Activated T-helper 2 cell treated with anti-CD3 and anti-CD28 coated beads, Interferon-gamma antibody, Interleukin-2, Interleukin-4, amounts not matched to agents 10 μg/mL and 5 μg/mL and 100 μg/mL, durations not matched to agents 14 hours and 24 hours and 36 hours (primary cell): ENCODE measurements at regions of chr6 and their contacts with region 1.

Region 1: GRCh38 chr6:87322304-87323212 is at the start of gene SMIM8:
- DNase-seq: peak; percentile 79
- H3K4me3 Mint-ChIP-seq: peak within 1 kb of the TSS; percentile 97
- H3K27ac Mint-ChIP-seq: peak within 1 kb of the TSS; percentile 83
- H3K4me1 Mint-ChIP-seq: peaks cover 6% of the 10 kb centered on the region
- H3K27me3 Mint-ChIP-seq: peaks cover 2% of the 10 kb centered on the region
- total RNA-seq, gene SMIM8: 6.3 and 10.3 TPM in 2 replicates

Region 2: DNA sequence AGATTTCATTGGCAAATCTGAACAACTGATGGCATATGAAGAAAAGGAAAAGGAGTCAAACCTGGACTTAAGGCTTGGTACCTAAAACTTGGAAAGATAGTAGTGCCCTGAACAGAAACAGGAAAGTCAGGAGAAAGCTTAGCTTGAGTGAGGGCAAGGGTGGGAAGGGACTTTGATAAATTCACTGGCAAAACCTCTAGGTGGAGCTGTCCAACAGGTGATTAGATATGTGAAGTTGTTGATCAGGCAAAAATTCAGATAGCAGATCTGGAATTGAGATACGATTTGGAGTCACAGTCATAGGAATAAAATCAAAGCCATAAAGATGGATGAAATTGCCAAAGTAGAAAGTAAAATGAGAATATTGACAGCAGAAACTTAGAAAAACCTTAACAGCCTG is 183.3 kb before region 1 on chr6:
- intact Hi-C with region 1: loop called (anchors 5 kb)
- DNase-seq: no peak
- H3K4me3 Mint-ChIP-seq: no peak overlapping the region
- H3K27ac Mint-ChIP-seq: no peak overlapping the region
- H3K4me1 Mint-ChIP-seq: peaks cover 1% of the 10 kb centered on the region
- H3K27me3 Mint-ChIP-seq: peaks cover 48% of the 10 kb centered on the region

Region 3: DNA sequence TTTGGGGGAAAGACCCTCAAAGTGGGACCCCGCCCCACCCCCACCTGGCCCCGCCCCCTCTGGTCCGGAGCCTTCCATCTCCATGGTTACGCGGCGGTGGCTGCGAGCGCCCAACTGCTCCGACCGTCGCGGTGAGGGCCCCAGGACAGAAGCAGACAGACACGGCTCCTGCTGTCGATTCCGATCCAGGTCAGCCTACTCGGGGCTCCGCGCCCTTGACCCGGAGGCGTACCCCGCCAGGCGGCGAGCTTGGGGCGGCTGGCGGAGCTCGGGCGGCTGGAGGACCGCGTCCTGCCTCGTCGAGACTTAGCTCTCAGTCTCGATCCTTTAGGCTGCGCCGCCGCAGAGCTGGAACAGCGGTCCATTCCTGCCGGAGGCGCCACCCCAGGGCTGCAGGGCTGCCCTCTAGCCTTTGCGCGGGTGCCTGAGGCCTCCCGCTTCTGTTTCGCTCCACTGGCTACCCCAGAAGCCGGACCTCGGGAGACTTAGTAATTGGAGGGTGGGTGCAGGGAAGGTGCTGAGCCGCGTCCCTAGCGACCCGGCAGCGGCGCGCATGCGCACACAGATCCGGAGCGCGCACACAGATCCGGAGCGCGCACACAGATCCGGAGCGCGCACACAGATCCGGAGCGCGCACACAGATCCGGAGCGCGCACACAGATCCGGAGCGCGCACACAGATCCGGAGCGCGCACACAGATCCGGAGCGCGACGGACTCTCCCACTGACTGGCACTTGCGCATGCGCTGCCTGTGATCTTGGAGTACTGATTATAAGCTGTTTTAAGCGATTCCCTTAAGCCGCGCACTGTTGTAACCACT is 85.6 kb after region 1 on chr6 and contains the start of gene CFAP206:
- intact Hi-C with region 1: loop called (anchors 1 kb)
- DNase-seq: peak; percentile 70
- H3K4me3 Mint-ChIP-seq: peak within 1 kb of the TSS; percentile 79
- H3K27ac Mint-ChIP-seq: no peak within 1 kb of the TSS
- H3K4me1 Mint-ChIP-seq: peaks cover 7% of the 10 kb centered on the region
- H3K27me3 Mint-ChIP-seq: peaks cover 29% of the 10 kb centered on the region
- total RNA-seq, gene CFAP206: not detected in 2 replicates

Region 4: DNA sequence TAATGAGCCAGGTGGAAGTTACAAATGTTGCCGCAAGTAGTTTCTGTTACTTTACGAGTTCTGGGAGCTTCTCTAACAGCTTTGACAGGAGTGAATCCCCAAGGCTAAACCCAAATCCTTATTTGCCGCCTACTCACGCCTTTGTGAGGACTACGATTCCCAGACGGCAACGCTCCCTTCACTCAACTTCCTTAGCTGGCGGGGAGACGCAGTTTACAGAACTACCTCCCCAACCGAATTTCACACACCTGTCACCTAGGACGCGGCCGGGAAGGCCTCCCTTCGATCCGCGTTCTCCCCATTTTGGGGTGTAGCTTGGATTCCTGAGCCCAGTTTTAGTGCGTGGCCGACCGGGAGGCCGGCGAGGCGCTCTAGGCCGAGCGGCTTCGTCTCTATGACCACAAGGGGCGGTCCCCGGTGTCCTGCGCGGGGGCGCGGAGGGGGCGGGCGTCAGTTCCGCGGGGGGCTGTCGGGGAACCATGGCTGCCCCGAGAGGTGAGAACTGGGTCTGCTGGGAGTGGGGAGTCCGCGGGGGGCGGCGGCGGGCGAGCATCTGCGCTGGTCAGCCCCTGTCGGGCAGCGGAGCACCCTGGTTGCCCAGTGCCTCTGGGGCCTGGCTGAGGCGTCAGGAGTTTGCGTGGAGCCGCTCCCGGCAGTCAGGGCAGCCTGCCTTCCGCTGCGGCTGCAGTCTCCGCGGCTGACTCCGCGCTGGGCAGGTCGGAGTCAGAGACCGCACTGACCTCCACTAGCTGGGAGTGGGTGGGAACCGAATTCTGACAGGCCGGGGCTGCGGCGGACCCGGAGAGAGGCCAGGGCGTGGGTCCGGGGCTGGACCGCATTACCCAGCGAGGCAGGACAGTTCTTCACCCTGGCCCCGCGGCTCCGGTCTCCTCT is 150.2 kb after region 1 on chr6 and contains the start of gene SLC35A1:
- intact Hi-C with region 1: loop called (anchors 1 kb)
- DNase-seq: peak; percentile 79
- H3K4me3 Mint-ChIP-seq: peak within 1 kb of the TSS; percentile 88
- H3K27ac Mint-ChIP-seq: peak within 1 kb of the TSS; percentile 88
- H3K4me1 Mint-ChIP-seq: peaks cover 7% of the 10 kb centered on the region
- H3K27me3 Mint-ChIP-seq: peaks cover 8% of the 10 kb centered on the region
- total RNA-seq, gene SLC35A1: 10.5 and 11.1 TPM in 2 replicates

Region 5: DNA sequence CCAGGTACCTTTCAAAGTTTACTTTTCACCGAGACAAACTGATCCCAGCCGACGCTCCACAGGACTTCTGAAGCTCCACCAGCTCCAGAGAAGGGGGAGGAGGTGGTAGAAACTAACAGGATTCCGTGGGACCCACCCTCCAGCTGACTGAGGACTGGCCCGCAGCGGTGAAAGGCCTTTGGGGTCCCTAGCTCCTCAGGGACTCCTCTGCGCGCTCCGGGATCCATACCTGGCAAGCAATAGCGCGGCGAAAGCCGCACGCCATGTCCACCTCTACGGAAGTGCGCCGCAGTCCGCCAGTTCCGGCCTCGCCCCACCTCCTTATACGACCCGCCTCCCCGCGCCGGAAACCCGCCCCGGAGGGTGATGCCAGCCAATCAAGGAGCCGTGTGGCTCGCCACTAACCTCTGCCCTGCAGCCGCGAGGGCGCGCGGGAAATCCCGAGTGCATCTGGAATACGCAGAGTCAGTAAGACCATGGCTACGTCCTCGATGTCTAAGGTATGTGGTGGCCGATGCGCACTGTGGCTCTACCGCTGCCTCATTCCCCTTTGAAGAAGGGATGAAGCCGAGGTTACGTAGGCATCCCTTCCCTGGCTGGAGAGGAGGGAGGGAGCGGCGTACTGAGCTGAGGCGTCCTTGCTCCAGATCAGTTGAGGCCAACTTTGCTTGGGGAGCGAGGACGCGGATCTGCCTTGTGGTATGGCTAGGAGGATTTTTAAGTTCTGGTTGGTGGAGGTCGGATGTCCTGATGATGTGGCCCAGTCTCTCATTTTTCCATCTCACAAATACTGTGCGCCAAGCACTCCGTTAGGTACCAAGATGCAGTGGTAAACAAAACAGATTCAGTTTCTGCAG is 267.4 kb after region 1 on chr6 and contains the starts of genes ORC3 and RARS2:
- intact Hi-C with region 1: loop called (anchors 2 kb)
- DNase-seq: peak; percentile 94
- H3K4me3 Mint-ChIP-seq: peak within 1 kb of the TSS; percentile 95
- H3K27ac Mint-ChIP-seq: peak within 1 kb of the TSS; percentile 89
- H3K4me1 Mint-ChIP-seq: peaks cover 39% of the 10 kb centered on the region
- H3K27me3 Mint-ChIP-seq: no peaks in the 10 kb centered on the region
- total RNA-seq, gene ORC3: 31.2 and 31.9 TPM in 2 replicates
- total RNA-seq, gene RARS2: 23.3 and 23.5 TPM in 2 replicates

Region 6: GRCh38 chr6:87606199-87606598 is 283.6 kb after region 1 on chr6:
- intact Hi-C with region 1: no loop called
- DNase-seq: no peak
- H3K4me3 Mint-ChIP-seq: no peak overlapping the region
- H3K27ac Mint-ChIP-seq: no peak overlapping the region
- H3K4me1 Mint-ChIP-seq: no peaks in the 10 kb centered on the region
- H3K27me3 Mint-ChIP-seq: no peaks in the 10 kb centered on the region